ENCODE measurements at regions of chr19 and their contacts with region 1.

Region 1: DNA sequence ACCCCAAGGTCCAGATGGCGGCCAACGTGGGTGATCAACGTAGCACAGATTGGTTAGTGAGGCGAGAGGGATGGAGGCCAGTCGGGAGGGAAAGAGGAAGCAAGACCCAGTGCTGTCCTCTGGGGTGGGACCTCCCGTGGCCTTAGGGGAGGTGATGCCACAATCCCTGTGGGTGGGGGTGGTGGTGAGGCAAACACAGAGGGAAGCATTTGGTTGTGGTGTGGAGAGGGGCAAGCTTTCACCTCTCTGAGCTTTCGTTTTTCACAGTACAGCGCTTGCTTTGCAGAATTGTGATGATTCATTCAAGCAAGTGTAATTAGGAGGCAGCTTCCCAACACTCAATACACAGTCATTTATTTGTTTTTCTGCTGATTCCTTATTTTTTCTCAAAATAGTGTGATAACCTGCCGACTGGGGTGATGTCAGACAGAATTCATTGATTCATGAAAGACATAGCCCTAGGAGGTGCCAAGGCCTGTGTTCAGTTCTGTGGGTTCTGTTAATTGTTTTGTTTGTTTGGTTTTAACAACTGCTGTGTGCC is 2.4 kb downstream of the LENG8 start:
- DNase-seq: peak in 2 of 4 donors; percentile 28 to 59
- ATAC-seq: no peak
- H3K4me3 ChIP-seq: no peak overlapping the region
- H3K27ac ChIP-seq: peak overlapping the region; percentile 6 to 100 (median 96)
- H3K4me1 ChIP-seq: peaks cover 51% of the 10 kb centered on the region
- H3K27me3 ChIP-seq: no peaks in the 10 kb centered on the region
- CTCF ChIP-seq: no peak
- POLR2A ChIP-seq: peak; percentile 14 to 61 (median 60)

Region 2: GRCh38 chr19:54541712-54542111 is 90.3 kb after region 1 on chr19:
- intact Hi-C with region 1: no loop called
- DNase-seq: no peak
- ATAC-seq: no peak
- H3K4me3 ChIP-seq: no peak overlapping the region
- H3K27ac ChIP-seq: no peak overlapping the region
- H3K4me1 ChIP-seq: no peaks in the 10 kb centered on the region
- H3K27me3 ChIP-seq: no peaks in the 10 kb centered on the region
- CTCF ChIP-seq: no peak
- POLR2A ChIP-seq: no peak

Region 3: GRCh38 chr19:55674841-55675660 is 1223.7 kb after region 1 on chr19 and contains the start of gene EPN1:
- intact Hi-C with region 1: loop called (anchors 10 kb)
- DNase-seq: peak; percentile 97 to 98 (median 98)
- ATAC-seq: peak; percentile 93
- H3K4me3 ChIP-seq: peak within 1 kb of the TSS; percentile 35 to 79
- H3K27ac ChIP-seq: peak within 1 kb of the TSS; percentile 80 to 95 (median 91)
- H3K4me1 ChIP-seq: peaks cover 54% of the 10 kb centered on the region
- H3K27me3 ChIP-seq: no peaks in the 10 kb centered on the region
- CTCF ChIP-seq: no peak
- POLR2A ChIP-seq: peak; percentile 9 to 61 (median 31)
- total RNA-seq, gene EPN1: 52.1 to 52.4 TPM

Measured in body of pancreas (tissue), 4 donors.